Gastrocnemius medialis (tissue), 4 donors: ENCODE measurements at regions of chr3 and their contacts with region 1.

Region 1: GRCh38 chr3:11803977-11804892 is 42.5 kb downstream of the TAMM41 start:
- DNase-seq: peak in 1 of 2 donors; percentile 8
- ATAC-seq: peak in 1 of 2 donors; percentile 72
- H3K4me3 ChIP-seq: no peak overlapping the region
- H3K27ac ChIP-seq: no peak overlapping the region
- H3K4me1 ChIP-seq: no peaks in the 10 kb centered on the region
- H3K27me3 ChIP-seq: no peaks in the 10 kb centered on the region
- CTCF ChIP-seq: peak; percentile 30 to 69 (median 61)
- POLR2A ChIP-seq: no peak

Region 2: GRCh38 chr3:11370191-11370590 is 434.0 kb before region 1 on chr3:
- in situ Hi-C with region 1: loop called in 2 of 4 experiments (anchors 5 to 10 kb)
- intact Hi-C with region 1: no loop called
- DNase-seq: no peak
- ATAC-seq: no peak
- H3K4me3 ChIP-seq: no peak overlapping the region
- H3K27ac ChIP-seq: no peak overlapping the region
- H3K4me1 ChIP-seq: peaks cover 44 to 46% of the 10 kb centered on the region in 2 donors
- H3K27me3 ChIP-seq: no peaks in the 10 kb centered on the region
- CTCF ChIP-seq: no peak
- POLR2A ChIP-seq: no peak

Region 3: DNA sequence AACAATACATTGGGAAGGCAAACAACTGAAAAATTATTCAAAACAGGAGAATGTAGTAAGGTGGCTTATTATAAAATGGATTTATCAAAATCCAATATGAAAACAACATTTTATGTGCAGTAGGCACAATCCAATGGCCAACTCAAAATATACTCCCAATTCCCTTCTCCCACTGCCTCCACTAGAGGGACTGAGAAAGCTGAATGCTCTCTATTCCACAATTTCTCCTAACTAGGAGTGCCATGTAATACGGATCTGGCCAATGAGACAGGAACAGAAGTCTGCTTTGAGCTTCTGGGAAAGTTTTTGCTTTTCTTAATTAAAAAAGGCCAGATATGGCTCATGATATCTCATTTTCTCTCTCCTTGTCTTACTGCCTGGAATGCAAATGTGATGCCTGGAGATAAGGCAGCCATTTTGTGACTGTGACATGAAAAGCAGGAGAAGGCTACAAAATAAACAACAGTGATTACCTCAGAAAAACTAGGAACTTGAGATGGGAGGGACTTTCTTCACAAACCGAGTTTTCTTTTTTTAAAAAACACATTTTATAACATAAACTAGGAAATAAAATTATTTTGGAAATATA is 141.7 kb before region 1 on chr3:
- in situ Hi-C with region 1: loop called (anchors 10 kb)
- intact Hi-C with region 1: no loop called
- DNase-seq: no peak
- ATAC-seq: no peak
- H3K4me3 ChIP-seq: no peak overlapping the region
- H3K27ac ChIP-seq: no peak overlapping the region
- H3K4me1 ChIP-seq: peaks cover 7 to 15% of the 10 kb centered on the region in 2 donors
- H3K27me3 ChIP-seq: no peaks in the 10 kb centered on the region
- CTCF ChIP-seq: no peak
- POLR2A ChIP-seq: no peak

Region 4: DNA sequence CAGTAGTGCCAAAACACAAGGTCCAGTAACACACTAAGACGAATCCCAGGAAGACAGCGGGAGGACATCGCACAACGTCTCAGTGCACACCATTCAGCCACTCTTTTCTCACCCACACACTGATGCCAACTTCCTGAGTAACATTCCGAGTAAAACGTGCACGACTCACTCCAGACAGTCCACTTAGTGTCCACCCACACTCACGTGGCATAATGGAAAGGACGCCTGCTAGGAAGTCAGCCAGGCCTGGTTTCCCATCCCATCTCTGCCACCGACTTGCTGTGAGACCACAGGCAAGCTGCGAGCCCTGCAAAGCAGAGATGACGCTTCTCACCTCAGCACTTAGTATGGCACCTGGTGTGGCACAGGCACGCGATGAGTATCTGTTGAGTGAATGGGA is 123.7 kb before region 1 on chr3:
- in situ Hi-C with region 1: no loop called
- intact Hi-C with region 1: no loop called
- DNase-seq: no peak
- ATAC-seq: no peak
- H3K4me3 ChIP-seq: no peak overlapping the region
- H3K27ac ChIP-seq: no peak overlapping the region
- H3K4me1 ChIP-seq: no peaks in the 10 kb centered on the region
- H3K27me3 ChIP-seq: no peaks in the 10 kb centered on the region
- CTCF ChIP-seq: no peak
- POLR2A ChIP-seq: no peak